AG04449 (cell line): ENCODE measurements at regions of chr7 and their contacts with region 1.

Region 1: GRCh38 chr7:23419845-23420244 is 50.4 kb downstream of the IGF2BP3 start:
- DNase-seq: no peak
- H3K4me3 ChIP-seq: no peak overlapping the region
- CTCF ChIP-seq: no peak

Region 2: GRCh38 chr7:23261843-23262452 is 157.9 kb before region 1 on chr7:
- CTCF ChIA-PET with region 1: no interaction called
- POLR2A ChIA-PET with region 1: no interaction called
- DNase-seq: no peak
- H3K4me3 ChIP-seq: no peak overlapping the region
- CTCF ChIP-seq: peak; percentile 89

Region 3: DNA sequence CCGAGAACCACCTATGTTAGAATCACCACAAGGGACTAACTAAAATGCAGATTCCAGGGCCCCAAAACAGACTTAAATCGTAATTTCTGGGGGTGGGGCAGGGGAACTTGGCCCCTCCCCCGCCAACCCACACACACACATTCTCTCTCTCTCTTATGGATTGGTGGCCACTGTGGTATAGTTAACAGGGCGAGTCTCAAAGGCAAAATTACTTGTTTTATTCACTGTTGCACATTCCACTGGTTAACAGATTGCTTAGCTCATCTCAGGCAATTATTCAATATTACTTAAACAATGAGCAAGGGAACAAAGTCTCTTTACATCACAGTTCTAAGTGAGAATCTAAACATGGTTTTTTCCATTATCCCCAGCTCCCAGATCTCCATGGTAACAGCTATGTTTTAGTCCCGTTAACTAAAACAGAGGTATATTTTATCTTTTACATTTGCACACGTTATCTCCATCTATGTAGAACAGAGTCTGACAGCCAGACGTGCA is 11.9 kb after region 1 on chr7:
- CTCF ChIA-PET with region 1: interaction called, 11 read pairs
- POLR2A ChIA-PET with region 1: interaction called, 3 read pairs
- DNase-seq: no peak
- H3K4me3 ChIP-seq: no peak overlapping the region
- CTCF ChIP-seq: no peak